Aorta (tissue), 5 donors: ENCODE measurements at regions of chr3 and their contacts with region 1.

Region 1: GRCh38 chr3:45593708-45594609 is 592 bp upstream of the LIMD1 start:
- DNase-seq: peak; percentile 85 to 90
- ATAC-seq: peak; percentile 83
- H3K4me3 ChIP-seq: peak overlapping the region; percentile 52 to 62
- H3K27ac ChIP-seq: peak overlapping the region; percentile 37 to 70
- H3K4me1 ChIP-seq: no peaks in the 10 kb centered on the region
- H3K27me3 ChIP-seq: no peaks in the 10 kb centered on the region

Region 2: GRCh38 chr3:45509768-45510129 is 84.2 kb before region 1 on chr3:
- intact Hi-C with region 1: loop called (anchors 5 kb)
- DNase-seq: no peak
- ATAC-seq: no peak
- H3K4me3 ChIP-seq: no peak overlapping the region
- H3K27ac ChIP-seq: no peak overlapping the region
- H3K4me1 ChIP-seq: no peaks in the 10 kb centered on the region
- H3K27me3 ChIP-seq: no peaks in the 10 kb centered on the region

Region 3: DNA sequence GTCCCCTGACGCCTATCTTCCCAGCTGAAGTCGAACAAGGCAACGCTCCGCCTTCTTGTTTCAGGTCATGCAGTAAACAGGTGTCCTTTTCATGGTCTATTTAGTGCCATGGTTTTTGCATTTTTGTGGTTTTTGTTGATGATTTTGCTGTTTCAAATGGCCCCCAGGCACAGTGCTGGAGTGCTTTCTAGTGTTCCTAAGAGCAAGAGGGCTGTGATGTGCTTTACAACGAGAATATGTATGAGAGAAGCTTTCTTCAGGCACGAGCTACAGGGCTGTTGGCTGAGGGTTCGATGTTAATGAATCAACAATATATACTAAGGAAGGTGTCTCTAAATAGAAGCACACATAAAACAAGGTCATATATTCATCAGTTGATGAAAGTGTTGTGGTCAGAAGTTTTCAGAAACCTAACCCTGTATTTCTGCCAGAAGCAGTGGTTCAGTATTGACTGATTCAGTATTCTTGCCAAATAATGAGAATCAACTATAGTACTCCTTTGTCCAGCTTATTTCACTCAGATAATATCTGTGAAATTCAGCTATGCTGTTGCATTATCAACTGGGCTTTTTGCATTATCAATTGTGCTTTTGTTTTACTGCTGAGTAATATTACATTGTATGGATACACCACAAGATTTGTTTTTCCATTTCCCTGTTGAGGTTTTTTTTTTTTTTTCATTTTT is 19.1 kb after region 1 on chr3:
- intact Hi-C with region 1: no loop called
- DNase-seq: no peak
- ATAC-seq: no peak
- H3K4me3 ChIP-seq: no peak overlapping the region
- H3K27ac ChIP-seq: no peak overlapping the region
- H3K4me1 ChIP-seq: peaks cover 0 to 10% of the 10 kb centered on the region in 2 donors
- H3K27me3 ChIP-seq: no peaks in the 10 kb centered on the region

Region 4: GRCh38 chr3:46960081-46960701 is 1366.2 kb after region 1 on chr3:
- intact Hi-C with region 1: no loop called
- DNase-seq: peak in 1 of 2 donors; percentile 72
- ATAC-seq: peak; percentile 43
- H3K4me3 ChIP-seq: no peak overlapping the region
- H3K27ac ChIP-seq: peak overlapping the region; percentile 37 to 46
- H3K4me1 ChIP-seq: peaks cover 0 to 1% of the 10 kb centered on the region in 2 donors
- H3K27me3 ChIP-seq: no peaks in the 10 kb centered on the region